ENCODE measurements at regions of chr19 and their contacts with region 1.

Region 1: DNA sequence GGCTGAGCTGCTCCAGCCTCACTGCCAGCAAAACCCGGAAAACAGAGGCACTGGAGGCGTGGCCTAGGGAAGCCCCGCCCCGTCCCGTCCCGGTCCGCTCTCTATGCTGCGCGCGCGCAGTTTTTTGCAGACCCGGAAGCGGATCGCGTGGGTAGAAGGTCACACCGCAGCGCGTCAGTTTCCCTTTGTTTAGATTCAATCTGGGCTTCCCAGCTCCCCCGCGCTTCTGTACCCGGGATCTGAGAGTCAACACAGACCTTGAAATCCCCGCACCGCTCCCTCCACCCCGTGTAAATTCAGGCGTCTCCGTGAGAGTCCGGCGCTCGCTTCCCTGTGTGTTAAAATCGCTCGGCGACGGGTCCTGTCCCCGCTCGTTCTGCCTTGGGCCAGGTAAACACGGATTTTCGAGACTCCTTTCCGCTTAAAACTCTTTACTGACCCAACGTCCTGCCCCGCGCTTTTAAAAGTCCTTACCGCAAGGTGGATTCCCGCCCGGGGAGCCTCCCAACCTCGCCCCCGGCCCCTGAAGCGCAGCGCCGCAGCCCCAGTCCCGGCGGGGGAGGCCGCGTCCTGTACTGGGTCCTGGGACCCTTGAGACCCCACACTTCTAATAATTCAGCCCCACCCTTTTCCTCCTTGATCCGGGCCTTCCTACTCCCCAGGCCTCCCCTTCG is at the start of gene ZNF610:
- DNase-seq: peak; percentile 71 to 91 (median 84)
- ATAC-seq: peak; percentile 96
- H3K4me3 ChIP-seq: peak within 1 kb of the TSS; percentile 70 to 87
- H3K4me3 Mint-ChIP-seq: peak within 1 kb of the TSS; percentile 98
- H3K27ac ChIP-seq: peak within 1 kb of the TSS; percentile 80 to 85
- H3K27ac Mint-ChIP-seq: peak within 1 kb of the TSS; percentile 99
- H3K4me1 ChIP-seq: peaks cover 6% of the 10 kb centered on the region
- H3K4me1 Mint-ChIP-seq: peaks cover 14% of the 10 kb centered on the region
- H3K27me3 ChIP-seq: no peaks in the 10 kb centered on the region
- H3K27me3 Mint-ChIP-seq: no peaks in the 10 kb centered on the region
- CTCF ChIP-seq: no peak
- total RNA-seq, gene ZNF610: 0.33 TPM

Region 2: DNA sequence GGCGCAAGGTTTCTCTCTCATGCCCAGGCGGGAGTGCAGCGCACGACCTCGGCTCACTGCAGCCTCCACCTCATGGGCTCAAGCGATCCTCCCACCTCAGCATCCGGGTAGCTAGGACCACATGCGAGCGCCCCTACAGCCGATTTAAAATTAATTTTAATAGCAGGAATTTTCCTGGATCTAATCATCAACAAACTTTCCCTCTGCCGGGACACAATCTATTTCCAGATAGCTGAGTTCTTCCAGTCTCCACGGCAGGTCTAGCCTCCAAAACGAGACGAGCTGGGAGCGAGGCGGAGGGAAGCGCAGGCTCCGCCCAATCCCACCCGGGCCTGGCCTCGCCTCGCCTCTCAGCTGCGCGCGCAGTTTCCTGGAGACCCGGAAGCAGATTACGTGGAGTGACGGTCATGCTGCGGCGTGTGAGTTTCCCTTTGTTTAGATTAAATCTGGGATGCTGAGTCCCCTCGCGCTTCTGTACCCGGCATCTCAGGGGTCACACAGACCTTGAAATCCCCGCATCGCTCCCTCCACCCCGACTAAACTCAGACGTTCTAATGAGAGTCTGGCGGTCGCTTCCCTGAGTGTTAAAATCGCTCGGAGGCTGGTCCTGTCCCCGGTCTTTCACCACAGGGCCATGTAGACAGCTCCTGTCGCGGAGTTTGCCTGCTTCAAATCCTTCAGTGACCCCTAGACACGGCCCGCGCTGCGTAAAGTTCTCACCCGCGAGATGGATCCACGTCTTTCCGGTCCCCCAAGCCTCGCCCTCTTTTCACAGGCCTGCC is 33.5 kb after region 1 on chr19 and contains the start of gene ZNF880:
- CTCF ChIA-PET with region 1: no interaction called
- POLR2A ChIA-PET with region 1: interaction called, 3 read pairs
- intact Hi-C with region 1: loop called in 1 of 2 experiments (anchors 2 kb)
- DNase-seq: peak; percentile 77 to 93 (median 91)
- ATAC-seq: peak; percentile 95
- H3K4me3 ChIP-seq: peak within 1 kb of the TSS; percentile 68 to 69
- H3K4me3 Mint-ChIP-seq: peak within 1 kb of the TSS; percentile 94
- H3K27ac ChIP-seq: peak within 1 kb of the TSS; percentile 93 to 98
- H3K27ac Mint-ChIP-seq: peak within 1 kb of the TSS; percentile 98
- H3K4me1 ChIP-seq: peaks cover 8% of the 10 kb centered on the region
- H3K4me1 Mint-ChIP-seq: peaks cover 20% of the 10 kb centered on the region
- H3K27me3 ChIP-seq: no peaks in the 10 kb centered on the region
- H3K27me3 Mint-ChIP-seq: no peaks in the 10 kb centered on the region
- CTCF ChIP-seq: no peak
- total RNA-seq, gene ZNF880: 26.1 to 31.0 TPM